ENCODE measurements at regions of chr19 and their contacts with region 1.

Region 1: DNA sequence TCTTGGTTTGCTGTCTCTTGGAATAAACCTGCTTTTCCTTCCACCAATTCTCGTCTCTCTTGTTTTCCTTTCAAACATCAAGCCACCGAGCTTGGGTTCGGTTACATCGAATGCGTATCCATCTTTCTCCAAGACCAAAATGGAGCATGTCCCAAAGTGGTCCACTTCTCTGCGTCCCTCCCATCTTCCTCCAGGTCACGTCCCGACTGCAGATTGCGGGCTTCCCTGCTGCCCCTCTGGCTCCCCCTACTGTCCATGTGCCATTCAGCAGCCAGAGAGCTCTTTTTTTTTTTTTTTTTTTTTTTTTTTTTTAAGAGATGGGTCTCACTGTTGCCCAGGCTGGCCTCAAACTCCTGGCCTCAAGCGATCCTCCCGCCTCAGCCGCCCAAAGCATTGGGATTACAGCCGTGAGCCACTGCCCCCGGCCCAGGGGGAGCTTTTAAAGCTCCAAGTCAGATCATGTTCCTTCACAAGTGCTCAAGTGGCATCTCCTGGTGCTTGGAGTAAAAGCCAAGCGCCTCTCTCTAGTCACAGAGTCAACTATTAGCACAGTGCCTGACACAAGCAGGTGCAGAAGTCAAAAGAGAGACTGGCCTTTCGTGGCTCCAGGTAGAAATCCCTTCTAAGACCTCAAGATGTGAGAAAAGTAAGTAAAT is 10.0 kb downstream of the COL5A3 start:
- DNase-seq: peak; percentile 70
- ATAC-seq: peak; percentile 92
- H3K4me3 ChIP-seq: no peak overlapping the region
- H3K27ac ChIP-seq: no peak overlapping the region
- H3K4me1 ChIP-seq: 0 out of 2 replicates have a peak, but pooled peaks cover 1% of the 10 kb centered on the region
- H3K27me3 ChIP-seq: no peaks in the 10 kb centered on the region
- CTCF ChIP-seq: peak; percentile 89
- POLR2A ChIP-seq: no peak
- RAD21 ChIP-seq: peak; percentile 85

Region 2: DNA sequence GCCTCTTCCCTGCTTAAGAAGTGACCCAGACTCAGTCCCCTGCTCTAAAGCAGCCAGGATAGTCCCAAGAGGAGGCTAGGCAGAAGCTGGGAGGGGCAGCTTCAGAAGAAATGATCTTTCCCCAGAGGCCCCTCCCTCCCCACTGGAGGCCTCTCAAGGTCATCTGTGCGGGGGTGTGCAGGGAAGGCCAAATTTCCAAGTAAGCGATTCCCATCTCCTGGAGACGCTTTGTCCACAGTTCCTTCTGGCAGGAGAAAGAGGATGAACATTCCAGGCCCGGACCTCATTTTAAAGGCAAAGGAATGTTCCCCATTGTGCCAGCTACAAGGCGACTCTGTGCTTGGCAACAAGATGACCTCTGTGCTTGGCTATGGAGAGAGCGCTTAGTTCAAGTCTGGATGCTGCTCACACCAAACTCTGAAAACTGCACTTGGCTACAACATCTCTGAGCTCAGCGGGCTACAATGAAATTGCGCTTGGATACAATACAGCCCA is 13.5 kb before region 1 on chr19:
- CTCF ChIA-PET with region 1: interaction called, 10 read pairs
- POLR2A ChIA-PET with region 1: interaction called, 4 read pairs
- dilution Hi-C with region 1: no loop called
- in situ Hi-C with region 1: no loop called
- intact Hi-C with region 1: no loop called
- DNase-seq: peak; percentile 29
- ATAC-seq: peak; percentile 32; the same call in 1 of the 2 replicates
- H3K4me3 ChIP-seq: no peak overlapping the region
- H3K27ac ChIP-seq: no peak overlapping the region
- H3K4me1 ChIP-seq: peaks cover 6% of the 10 kb centered on the region
- H3K27me3 ChIP-seq: no peaks in the 10 kb centered on the region
- CTCF ChIP-seq: no peak
- POLR2A ChIP-seq: no peak
- RAD21 ChIP-seq: no peak

Region 3: DNA sequence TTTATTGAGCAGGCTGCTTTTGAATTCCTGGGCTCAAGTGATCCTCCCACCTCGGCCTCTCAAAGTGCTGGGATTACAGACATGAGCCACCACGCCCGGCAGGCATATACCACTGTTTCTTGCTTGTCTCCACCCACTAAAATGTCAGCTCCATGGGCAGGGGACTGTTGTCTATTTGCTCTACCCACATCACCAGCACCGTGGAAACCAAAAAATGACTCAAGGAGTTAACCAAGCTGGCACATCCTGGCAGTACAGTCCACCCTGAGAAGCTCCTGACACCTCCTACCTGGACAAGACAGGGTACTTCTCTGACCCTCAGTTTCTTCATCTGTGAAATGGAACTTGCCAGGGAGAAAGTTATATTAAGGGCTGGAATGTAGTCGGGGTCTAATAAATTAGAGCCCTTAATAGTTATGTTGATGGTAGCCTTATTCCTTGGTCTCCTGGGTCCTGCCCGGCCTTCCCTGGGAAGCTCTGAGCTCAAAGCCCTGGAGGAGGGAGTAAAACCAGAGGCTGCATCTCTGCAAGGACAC is 26.9 kb after region 1 on chr19:
- CTCF ChIA-PET with region 1: interaction called, 16 read pairs
- POLR2A ChIA-PET with region 1: no interaction called
- dilution Hi-C with region 1: no loop called
- in situ Hi-C with region 1: no loop called
- intact Hi-C with region 1: loop called (anchors 2 kb)
- DNase-seq: no peak
- ATAC-seq: no peak
- H3K4me3 ChIP-seq: no peak overlapping the region
- H3K27ac ChIP-seq: no peak overlapping the region
- H3K4me1 ChIP-seq: 0 out of 2 replicates have a peak, but pooled peaks cover 2% of the 10 kb centered on the region
- H3K27me3 ChIP-seq: peaks cover 22% of the 10 kb centered on the region
- CTCF ChIP-seq: no peak
- POLR2A ChIP-seq: no peak
- RAD21 ChIP-seq: no peak

Measured in IMR-90 (cell line).